Activated CD8-positive, alpha-beta memory T cell treated with anti-CD3 and anti-CD28 coated beads, Interleukin-2, amount 10 ng/mL, durations not matched to agents 7 days and 5 days (primary cell): ENCODE measurements at regions of chr14 and their contacts with region 1.

Region 1: GRCh38 chr14:76710056-76711010 is 50.9 kb upstream of the VASH1 start:
- DNase-seq: peak; percentile 41
- ATAC-seq: peak; percentile 36
- H3K4me3 Mint-ChIP-seq: no peak overlapping the region
- H3K27ac Mint-ChIP-seq: no peak overlapping the region
- H3K4me1 Mint-ChIP-seq: no peaks in the 10 kb centered on the region
- H3K27me3 Mint-ChIP-seq: peaks cover 16% of the 10 kb centered on the region

Region 2: GRCh38 chr14:76697246-76697905 is 13.0 kb before region 1 on chr14:
- CTCF ChIA-PET with region 1: interaction called, 15 read pairs
- DNase-seq: no peak
- ATAC-seq: no peak
- H3K4me3 Mint-ChIP-seq: no peak overlapping the region
- H3K27ac Mint-ChIP-seq: no peak overlapping the region
- H3K4me1 Mint-ChIP-seq: no peaks in the 10 kb centered on the region
- H3K27me3 Mint-ChIP-seq: peaks cover 6% of the 10 kb centered on the region

Region 3: DNA sequence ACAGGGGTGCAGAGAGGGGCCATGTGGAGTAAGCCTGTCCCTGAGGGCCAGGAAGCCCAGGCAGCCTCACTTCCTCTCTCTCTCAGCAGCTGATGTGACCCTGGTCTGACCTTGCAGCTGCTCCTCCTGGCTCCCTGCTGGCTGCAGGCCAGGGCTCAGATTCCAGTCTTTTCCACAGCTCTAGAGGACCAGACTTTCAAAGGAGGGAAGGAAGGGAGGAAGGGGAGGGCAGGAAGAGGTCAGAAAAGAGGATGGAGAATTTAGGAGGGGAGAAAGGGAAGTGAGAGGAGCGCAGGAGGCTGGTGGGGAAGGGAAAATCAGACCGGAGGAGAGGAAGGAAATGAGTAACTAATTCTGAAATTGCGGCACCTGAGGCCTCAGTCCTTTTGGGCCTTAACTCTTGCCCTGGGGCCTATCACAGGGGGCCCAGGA is 10.1 kb after region 1 on chr14:
- CTCF ChIA-PET with region 1: interaction called, 10 read pairs
- DNase-seq: no peak
- ATAC-seq: no peak
- H3K4me3 Mint-ChIP-seq: no peak overlapping the region
- H3K27ac Mint-ChIP-seq: no peak overlapping the region
- H3K4me1 Mint-ChIP-seq: peaks cover 4% of the 10 kb centered on the region
- H3K27me3 Mint-ChIP-seq: peaks cover 45% of the 10 kb centered on the region

Region 4: GRCh38 chr14:76784266-76785264 is 74.2 kb after region 1 on chr14:
- CTCF ChIA-PET with region 1: interaction called, 83 read pairs
- DNase-seq: peak; percentile 73
- ATAC-seq: peak; percentile 84
- H3K4me3 Mint-ChIP-seq: no peak overlapping the region
- H3K27ac Mint-ChIP-seq: no peak overlapping the region
- H3K4me1 Mint-ChIP-seq: peaks cover 42% of the 10 kb centered on the region
- H3K27me3 Mint-ChIP-seq: no peaks in the 10 kb centered on the region

Region 5: GRCh38 chr14:76812211-76813044 is 102.1 kb after region 1 on chr14 and contains the start of gene ANGEL1:
- CTCF ChIA-PET with region 1: interaction called, 43 read pairs
- DNase-seq: peak; percentile 97
- ATAC-seq: peak; percentile 96
- H3K4me3 Mint-ChIP-seq: peak within 1 kb of the TSS; percentile 85
- H3K27ac Mint-ChIP-seq: peak within 1 kb of the TSS; percentile 69
- H3K4me1 Mint-ChIP-seq: peaks cover 20% of the 10 kb centered on the region
- H3K27me3 Mint-ChIP-seq: no peaks in the 10 kb centered on the region
- total RNA-seq, gene ANGEL1: 12.9 to 14.6 TPM

Region 6: GRCh38 chr14:76848890-76849289 is 138.6 kb after region 1 on chr14:
- CTCF ChIA-PET with region 1: no interaction called
- DNase-seq: no peak
- ATAC-seq: no peak
- H3K4me3 Mint-ChIP-seq: no peak overlapping the region
- H3K27ac Mint-ChIP-seq: no peak overlapping the region
- H3K4me1 Mint-ChIP-seq: peaks cover 7% of the 10 kb centered on the region
- H3K27me3 Mint-ChIP-seq: peaks cover 7% of the 10 kb centered on the region